ENCODE measurements at regions of chr21 and their contacts with region 1.

Region 1: DNA sequence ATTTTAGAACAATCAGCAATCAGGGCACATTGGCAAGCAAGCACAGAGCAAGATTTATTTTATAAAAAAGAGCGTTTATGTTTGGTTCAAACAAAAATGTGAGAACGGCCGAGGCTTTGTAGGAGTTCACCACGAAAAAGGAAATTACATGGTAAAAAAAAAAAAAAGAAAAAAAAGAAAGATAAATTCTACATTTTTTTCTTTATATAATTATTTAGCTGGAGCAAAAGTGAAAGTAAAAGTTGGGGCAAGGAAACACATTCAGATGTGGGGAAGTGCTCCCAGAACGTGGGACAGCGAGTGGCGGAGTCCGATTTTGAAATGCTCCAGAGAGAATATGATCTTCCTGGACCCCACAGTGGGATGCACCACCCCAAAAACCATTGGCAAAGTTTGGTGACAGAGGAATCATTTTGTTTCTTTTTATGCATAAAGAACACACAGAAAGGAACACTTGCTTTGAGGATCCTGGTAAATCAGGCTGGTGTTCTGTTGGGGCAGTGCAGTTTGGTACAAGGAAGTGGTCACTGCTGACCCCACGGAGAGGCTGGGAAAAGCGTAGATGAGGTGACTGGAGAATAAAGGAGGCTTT is 16.3 kb upstream of the ATP5PO start:
- DNase-seq: peak in 1 of 5 donors; percentile 56
- H3K4me3 ChIP-seq: peak overlapping the region; percentile 83
- H3K4me3 Mint-ChIP-seq: peak overlapping the region; percentile 91 to 100 (median 96)
- H3K27ac ChIP-seq: peak overlapping the region; percentile 98
- H3K27ac Mint-ChIP-seq: peak overlapping the region; percentile 96 to 100 (median 99)
- H3K4me1 ChIP-seq: peaks cover 49% of the 10 kb centered on the region
- H3K4me1 Mint-ChIP-seq: peaks cover 38 to 46% (median 41%) of the 10 kb centered on the region in 3 donors
- H3K27me3 ChIP-seq: no peaks in the 10 kb centered on the region
- H3K27me3 Mint-ChIP-seq: peaks cover 0 to 1% of the 10 kb centered on the region in 2 donors

Region 2: DNA sequence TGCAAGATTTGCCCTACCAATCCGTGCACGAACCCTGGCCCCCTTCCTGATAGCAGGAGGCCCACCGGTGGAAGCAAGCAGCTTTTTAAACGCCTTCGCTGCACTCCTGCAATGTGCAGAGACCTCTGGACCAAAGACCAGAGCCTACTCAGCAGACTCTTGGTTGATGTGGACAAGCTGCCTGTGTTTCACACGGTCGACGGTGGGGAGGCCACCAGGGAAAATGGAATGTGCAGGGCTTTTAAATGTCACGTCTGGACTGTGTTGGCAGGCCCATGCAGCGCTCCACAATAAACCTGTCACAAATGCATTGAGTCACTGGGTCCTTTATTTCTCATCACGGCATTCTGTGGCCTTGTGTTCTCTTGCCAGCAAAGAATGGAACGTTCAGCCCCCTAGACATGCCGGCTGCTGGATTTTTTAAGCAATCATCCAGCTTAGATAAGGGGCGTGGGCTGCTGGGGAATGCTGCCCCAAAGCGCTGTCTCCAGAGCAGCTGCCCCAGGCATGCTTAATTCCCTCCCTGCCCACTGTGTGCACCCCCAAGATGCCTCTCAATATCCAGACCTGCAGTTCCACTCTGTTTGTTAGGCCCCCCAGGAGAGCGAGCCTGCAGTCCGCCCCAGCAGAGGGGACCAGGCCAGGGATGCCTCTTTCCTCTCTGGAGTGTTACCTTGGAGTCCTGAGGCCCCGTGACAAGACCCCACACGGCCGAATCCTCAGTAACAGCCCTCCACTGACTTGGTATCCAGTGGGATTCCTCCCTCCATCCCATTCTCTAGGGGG is 87.6 kb before region 1 on chr21:
- CTCF ChIA-PET with region 1: no interaction called
- POLR2A ChIA-PET with region 1: no interaction called
- DNase-seq: no peak
- H3K4me3 ChIP-seq: no peak overlapping the region
- H3K4me3 Mint-ChIP-seq: no peak overlapping the region
- H3K27ac ChIP-seq: no peak overlapping the region
- H3K27ac Mint-ChIP-seq: no peak overlapping the region
- H3K4me1 ChIP-seq: no peaks in the 10 kb centered on the region
- H3K4me1 Mint-ChIP-seq: no peaks in the 10 kb centered on the region
- H3K27me3 ChIP-seq: no peaks in the 10 kb centered on the region
- H3K27me3 Mint-ChIP-seq: peaks cover 5 to 8% of the 10 kb centered on the region in 2 donors

Region 3: GRCh38 chr21:34004974-34005373 is 73.1 kb after region 1 on chr21:
- CTCF ChIA-PET with region 1: no interaction called
- POLR2A ChIA-PET with region 1: interaction called, 10 read pairs
- DNase-seq: no peak
- H3K4me3 ChIP-seq: no peak overlapping the region
- H3K4me3 Mint-ChIP-seq: no peak overlapping the region
- H3K27ac ChIP-seq: no peak overlapping the region
- H3K27ac Mint-ChIP-seq: no peak overlapping the region
- H3K4me1 ChIP-seq: no peaks in the 10 kb centered on the region
- H3K4me1 Mint-ChIP-seq: peaks cover 8 to 21% (median 11%) of the 10 kb centered on the region in 3 donors
- H3K27me3 ChIP-seq: no peaks in the 10 kb centered on the region
- H3K27me3 Mint-ChIP-seq: no peaks in the 10 kb centered on the region

Region 4: DNA sequence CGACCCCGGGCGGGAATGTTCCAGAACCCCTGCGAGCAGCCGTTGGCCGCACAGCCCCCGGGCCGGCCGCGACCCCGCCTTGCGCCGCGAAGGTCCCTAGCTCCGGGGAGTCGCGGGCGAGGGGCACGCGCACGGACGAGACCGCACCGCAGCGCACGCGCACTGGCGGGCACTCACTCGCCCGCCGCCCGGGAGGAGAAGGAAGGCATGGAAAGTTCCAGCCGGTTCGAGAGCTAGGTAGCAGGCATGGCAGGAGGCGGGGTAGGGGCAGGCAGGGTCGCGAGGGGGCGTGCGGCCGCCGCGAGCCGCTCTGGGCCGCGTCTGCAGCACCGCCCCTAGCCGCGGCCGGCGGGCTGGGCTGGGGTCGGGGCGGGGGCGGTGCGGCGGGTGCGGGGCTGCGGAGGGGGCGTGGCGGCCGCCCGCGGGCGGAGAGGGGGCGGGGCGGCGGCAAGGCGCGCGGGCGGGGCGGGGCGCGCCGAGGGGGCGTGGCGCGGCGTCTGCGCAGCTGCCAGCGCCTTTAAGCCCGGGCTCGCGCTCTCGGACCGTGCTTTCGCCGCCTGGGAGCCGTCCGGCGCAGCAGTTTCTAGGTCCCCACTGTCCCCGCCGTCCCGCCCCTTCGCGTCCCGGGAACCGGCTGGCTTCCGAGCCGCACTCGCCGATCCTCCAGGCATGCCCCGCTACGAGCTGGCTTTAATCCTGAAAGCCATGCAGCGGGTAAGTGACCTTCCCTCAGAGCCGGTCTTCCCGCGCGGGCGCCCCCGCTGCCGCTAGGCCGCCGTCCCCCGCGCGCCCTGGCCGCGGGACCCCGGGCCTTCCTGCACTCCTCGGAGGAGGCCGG is 141.4 kb after region 1 on chr21 and contains the starts of genes MRPS6 and SLC5A3:
- CTCF ChIA-PET with region 1: interaction called, 3 read pairs
- POLR2A ChIA-PET with region 1: interaction called, 11 read pairs
- DNase-seq: peak; percentile 63 to 76 (median 71)
- H3K4me3 ChIP-seq: peak within 1 kb of the TSS; percentile 61
- H3K4me3 Mint-ChIP-seq: peak within 1 kb of the TSS; percentile 91 to 97 (median 95)
- H3K27ac ChIP-seq: peak within 1 kb of the TSS; percentile 63
- H3K27ac Mint-ChIP-seq: peak within 1 kb of the TSS; percentile 64 to 97 (median 92)
- H3K4me1 ChIP-seq: peaks cover 38% of the 10 kb centered on the region
- H3K4me1 Mint-ChIP-seq: peaks cover 6 to 47% (median 44%) of the 10 kb centered on the region in 3 donors
- H3K27me3 ChIP-seq: no peaks in the 10 kb centered on the region
- H3K27me3 Mint-ChIP-seq: peaks cover 0 to 5% of the 10 kb centered on the region in 2 donors
- total RNA-seq, gene MRPS6: 134 to 136 TPM
- total RNA-seq, gene SLC5A3: 23.2 to 23.8 TPM

Region 5: GRCh38 chr21:34351786-34352241 is 419.9 kb after region 1 on chr21:
- CTCF ChIA-PET with region 1: interaction called, 10 read pairs
- POLR2A ChIA-PET with region 1: no interaction called
- DNase-seq: peak in 1 of 5 donors; percentile 10
- H3K4me3 ChIP-seq: no peak overlapping the region
- H3K4me3 Mint-ChIP-seq: no peak overlapping the region
- H3K27ac ChIP-seq: no peak overlapping the region
- H3K27ac Mint-ChIP-seq: no peak overlapping the region
- H3K4me1 ChIP-seq: no peaks in the 10 kb centered on the region
- H3K4me1 Mint-ChIP-seq: peaks cover 4 to 6% (median 5%) of the 10 kb centered on the region in 3 donors
- H3K27me3 ChIP-seq: no peaks in the 10 kb centered on the region
- H3K27me3 Mint-ChIP-seq: peaks cover 25 to 26% of the 10 kb centered on the region in 2 donors